Posterior cingulate gyrus (tissue), 11 donors: ENCODE measurements at regions of chr18 and their contacts with region 1.

Region 1: DNA sequence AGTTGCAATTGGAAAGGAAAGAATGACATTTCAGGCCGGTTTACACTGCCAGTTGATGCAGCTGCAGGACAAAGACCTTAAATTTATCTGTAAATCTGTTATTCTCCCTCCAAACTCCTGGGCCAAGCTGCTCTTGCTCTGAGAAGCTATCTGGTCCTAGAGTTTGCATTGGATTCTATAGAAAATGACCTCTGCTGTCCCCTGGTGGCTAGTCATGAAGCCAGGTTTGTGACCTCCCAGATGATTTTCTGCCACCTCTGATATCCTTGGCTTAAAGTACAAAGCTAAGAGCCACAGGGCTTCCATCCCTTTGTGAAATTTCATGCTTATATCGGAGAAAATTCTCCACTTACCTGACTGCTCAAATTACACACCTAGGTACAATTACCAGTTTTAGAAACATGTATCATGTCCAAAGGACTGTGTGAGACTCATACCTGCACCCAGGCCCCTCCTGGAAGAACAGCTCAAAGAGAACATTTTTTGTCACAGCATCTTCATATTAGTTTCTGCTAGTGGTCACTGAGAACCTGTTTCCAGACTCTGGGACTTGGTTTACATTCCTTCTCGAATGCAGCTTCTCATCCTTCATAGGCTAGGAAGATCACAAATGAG is 28.9 kb upstream of the IER3IP1 start:
- DNase-seq: peak in 3 of 10 donors; percentile 10 to 45 (median 29)

Region 2: GRCh38 chr18:47050468-47050867 is 154.5 kb before region 1 on chr18:
- intact Hi-C with region 1: loop called (anchors 1 kb)
- DNase-seq: peak in 1 of 10 donors; percentile 26

Region 3: GRCh38 chr18:47100214-47100831 is 104.7 kb before region 1 on chr18:
- intact Hi-C with region 1: loop called (anchors 1 kb)
- DNase-seq: peak in 8 of 10 donors; percentile 31 to 90 (median 64)

Region 4: DNA sequence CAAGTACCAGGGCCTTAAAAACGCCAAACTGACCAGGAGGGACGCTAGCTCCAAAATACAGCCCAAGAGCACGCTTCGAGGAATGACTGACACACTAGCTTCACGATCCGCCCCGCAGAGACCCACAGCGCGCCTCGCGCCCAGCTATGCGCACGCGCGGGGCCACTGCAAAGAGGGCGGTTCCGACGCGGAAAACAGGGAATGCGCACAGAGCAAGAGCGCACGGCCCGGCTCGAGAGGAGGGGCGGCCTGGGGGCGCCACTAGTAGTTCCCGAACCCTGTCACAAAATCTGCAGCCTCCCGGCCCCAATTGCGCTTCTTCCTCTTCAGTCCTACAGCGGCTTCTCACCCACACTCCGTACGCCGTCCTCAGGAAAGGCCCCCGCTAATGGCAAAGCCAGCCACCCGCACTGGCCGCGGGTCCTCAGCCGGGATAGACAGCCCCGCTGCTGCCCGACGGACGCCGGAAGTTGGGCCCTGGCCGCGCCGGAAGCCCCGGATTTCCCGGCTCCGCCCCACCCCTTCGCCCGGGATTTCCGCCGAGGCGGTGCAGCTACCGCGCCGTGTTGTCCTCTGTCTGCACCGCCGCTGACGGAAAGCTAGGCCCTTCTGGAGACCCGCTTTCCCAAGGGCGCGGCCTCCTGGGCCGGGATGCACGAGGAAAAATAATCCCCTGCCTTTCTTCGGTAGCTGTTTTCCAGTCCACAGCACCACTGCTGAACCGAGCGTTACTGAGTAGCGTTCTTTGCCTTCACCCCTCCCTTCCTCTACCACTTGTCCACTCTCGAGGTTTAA is 54.8 kb before region 1 on chr18 and contains the start of gene HDHD2:
- intact Hi-C with region 1: no loop called
- DNase-seq: peak; percentile 83 to 98 (median 90)